ENCODE measurements at regions of chr1 and their contacts with region 1.

Region 1: GRCh38 chr1:28248283-28249012 is 10.9 kb upstream of the SESN2 start:
- DNase-seq: peak; percentile 82

Region 2: DNA sequence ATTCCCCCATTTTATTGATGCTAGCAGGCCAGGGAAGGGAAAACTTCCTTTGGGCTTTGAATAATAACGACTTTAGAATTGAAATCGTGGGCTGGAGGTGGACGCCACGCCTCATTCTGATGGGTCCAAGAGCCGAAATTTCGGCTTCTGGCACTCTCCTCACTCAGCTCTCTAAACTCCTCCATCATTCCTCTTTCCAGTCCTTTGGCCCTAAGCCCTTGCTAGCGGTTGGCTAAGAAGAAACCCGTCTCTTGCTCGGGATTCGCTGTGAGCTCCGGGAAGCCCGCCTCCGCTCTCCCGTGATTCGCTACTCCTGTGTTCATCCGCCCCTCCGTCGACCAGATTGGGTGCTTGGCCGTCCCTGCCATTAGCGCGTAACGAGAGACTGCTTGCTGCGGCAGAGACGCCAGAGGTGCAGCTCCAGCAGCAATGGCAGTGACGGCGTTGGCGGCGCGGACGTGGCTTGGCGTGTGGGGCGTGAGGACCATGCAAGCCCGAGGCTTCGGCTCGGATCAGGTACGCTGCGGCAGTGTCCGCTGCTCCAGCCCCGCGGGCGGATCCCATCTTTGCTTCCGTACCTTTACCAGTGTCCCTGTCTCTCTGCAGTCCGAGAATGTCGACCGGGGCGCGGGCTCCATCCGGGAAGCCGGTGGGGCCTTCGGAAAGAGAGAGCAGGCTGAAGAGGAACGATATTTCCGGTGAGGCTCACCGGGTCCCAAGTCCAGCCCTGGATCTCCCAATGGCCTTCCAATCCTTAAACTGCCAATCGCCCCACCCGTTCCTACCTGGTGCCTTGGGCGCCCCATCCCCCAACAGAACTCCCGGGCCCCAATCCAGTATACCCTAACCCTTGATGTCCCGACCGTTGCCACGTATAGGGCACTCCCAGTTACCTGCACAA is 12.4 kb before region 1 on chr1 and contains the start of gene ATP5IF1:
- CTCF ChIA-PET with region 1: interaction called, 7 read pairs
- POLR2A ChIA-PET with region 1: interaction called, 51 read pairs
- DNase-seq: peak; percentile 100

Region 3: DNA sequence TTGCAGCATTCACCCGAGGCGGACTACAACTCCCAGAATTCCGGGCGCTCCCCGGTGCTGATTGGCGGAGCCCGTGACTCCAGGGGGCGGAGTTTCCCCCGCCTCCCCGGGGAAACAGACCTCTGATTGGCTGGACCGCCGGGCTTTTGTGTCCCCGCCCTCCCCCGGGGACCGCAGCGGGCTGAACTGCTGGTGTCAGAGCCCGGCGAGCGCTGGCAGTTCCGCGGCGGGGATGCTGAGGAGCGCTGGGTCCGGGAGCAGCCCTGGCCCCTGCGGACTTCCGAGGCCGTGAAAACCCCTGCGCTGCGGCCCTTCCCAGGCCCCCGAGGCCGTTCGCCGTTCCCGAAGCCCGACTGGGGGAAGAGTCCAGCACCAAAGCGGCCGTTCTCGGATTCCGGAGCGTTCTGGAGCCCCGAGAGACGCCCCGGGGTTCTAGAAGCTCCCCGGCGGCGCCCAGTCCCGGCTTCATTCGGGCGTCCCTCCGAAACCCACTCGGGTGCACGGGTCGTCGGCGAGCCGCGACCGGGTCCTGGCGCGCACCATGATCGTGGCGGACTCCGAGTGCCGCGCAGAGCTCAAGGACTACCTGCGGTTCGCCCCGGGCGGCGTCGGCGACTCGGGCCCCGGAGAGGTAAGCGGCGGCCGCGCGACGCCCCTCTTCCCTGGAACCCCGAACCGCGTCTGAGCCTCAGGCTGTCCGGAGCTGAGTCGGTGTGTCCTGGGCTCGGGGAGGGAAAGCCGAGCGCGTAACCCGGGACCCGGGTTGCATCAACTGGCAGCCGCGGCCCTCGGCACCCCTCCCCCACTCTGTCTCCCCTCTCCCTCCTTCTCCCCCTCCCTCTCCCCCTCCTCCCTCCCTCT is 11.1 kb after region 1 on chr1 and contains the start of gene SESN2:
- CTCF ChIA-PET with region 1: interaction called, 20 read pairs
- POLR2A ChIA-PET with region 1: interaction called, 89 read pairs
- DNase-seq: peak; percentile 100

Region 4: GRCh38 chr1:28266920-28267322 is 18.5 kb after region 1 on chr1:
- CTCF ChIA-PET with region 1: interaction called, 8 read pairs
- POLR2A ChIA-PET with region 1: interaction called, 89 read pairs
- DNase-seq: peak; percentile 45

Region 5: DNA sequence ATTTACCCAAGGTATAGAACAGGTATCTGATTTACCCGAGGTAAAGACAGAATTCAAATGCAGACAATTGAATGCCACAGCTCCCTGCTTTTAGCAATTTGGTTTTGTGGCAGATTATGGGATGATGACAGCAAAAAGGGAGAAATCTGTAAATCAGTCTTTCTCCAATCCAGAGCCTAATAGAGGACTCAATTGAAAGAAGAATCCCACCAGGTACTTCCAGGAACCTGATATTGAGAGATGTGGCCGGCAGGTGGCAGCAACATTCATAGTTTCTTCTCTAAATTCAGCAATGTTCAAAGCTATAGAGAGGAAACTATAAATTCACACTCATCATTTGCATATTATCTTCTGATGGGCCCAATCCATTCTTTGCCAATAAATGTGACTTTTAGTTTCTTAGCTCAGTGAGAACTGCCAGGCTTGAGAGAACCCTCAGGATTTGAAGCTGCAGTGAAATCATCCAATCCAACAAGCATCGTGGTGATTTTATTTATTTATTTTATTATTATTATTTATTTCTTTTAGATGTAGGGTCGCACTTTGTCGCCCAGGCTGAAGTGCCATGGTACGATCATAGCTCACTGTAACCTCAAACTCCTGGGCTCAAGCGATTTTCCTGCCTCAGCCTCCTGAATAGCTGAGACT is 111.3 kb after region 1 on chr1:
- CTCF ChIA-PET with region 1: interaction called, 16 read pairs
- POLR2A ChIA-PET with region 1: interaction called, 6 read pairs
- DNase-seq: peak; percentile 79

Region 6: DNA sequence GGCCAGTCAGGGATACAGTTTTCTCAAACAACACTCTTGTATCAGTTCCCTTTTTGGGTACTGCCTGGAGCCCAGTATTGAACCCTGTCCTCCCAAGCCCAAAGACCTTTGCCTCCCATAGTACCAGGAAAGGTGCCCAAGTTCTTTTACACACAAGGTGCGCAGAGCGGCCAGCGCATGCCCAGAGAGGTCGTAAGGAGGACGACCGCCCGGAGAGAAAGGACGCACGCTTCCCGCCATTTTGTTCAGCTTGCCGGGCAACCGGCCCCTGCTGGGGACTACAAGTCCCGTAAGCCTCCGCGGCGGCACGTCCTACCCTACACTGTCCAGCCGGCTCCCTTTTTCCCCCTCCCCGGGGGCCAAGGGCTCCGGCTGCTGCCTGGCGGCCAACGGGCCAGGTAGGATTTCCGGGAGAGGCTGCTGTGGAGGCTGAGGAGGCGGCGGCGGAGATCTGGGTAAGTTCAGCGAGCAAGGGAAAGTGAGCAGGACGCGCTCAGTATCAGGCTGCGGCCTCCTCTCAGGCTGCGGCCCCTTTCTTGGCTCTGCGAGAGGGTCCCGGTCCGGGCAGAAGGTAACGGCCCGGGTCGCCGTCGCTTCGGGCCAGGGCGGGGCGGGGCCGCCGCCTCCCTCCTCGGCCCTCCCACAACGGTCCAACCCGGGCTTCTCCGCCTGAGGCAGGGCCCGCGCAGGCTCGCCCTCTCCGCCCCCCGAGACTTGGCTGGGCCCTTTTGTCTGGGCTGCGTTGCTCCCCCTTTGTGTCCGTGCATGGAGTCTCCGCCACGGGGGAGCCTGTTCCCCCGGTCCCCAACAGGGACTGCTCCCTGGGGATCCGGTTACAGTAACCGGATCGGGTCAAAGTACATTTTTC is 121.2 kb after region 1 on chr1 and contains the start of gene PHACTR4:
- CTCF ChIA-PET with region 1: interaction called, 23 read pairs
- POLR2A ChIA-PET with region 1: interaction called, 13 read pairs
- DNase-seq: peak; percentile 98